Posterior vena cava (tissue), 2 donors: ENCODE measurements at regions of chr11 and their contacts with region 1.

Region 1: GRCh38 chr11:2752195-2752790 is 52.5 kb upstream of the KCNQ1OT1 start:
- DNase-seq: peak; percentile 42

Region 2: GRCh38 chr11:2825889-2826678 is 73.8 kb after region 1 on chr11:
- intact Hi-C with region 1: loop called in 1 of 2 experiments (anchors 2 kb)
- DNase-seq: peak; percentile 93

Region 3: DNA sequence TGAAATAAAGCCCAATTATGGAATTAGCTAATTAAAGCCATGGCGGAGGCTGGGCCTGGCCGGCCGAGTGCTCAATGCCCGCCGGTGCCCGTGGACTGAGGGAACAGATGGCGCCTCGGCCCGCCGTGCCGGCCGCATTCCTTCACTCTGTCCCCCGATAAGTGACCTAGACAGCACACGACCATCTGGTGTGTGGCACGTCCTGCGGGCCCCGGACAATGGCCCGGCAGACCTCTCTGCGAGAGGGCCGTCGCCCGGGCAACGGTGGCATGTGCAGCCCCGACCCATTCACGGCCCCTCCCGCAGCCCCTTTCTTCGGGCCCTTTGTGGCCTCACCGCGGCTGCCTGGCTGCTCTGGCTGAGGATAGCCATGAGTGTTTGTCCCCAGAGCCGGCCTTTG is 98.1 kb after region 1 on chr11:
- intact Hi-C with region 1: no loop called
- DNase-seq: no peak

Region 4: GRCh38 chr11:3014057-3014938 is 262.0 kb after region 1 on chr11:
- intact Hi-C with region 1: no loop called
- DNase-seq: no peak